ENCODE measurements at regions of chr1 and their contacts with region 1.

Region 1: DNA sequence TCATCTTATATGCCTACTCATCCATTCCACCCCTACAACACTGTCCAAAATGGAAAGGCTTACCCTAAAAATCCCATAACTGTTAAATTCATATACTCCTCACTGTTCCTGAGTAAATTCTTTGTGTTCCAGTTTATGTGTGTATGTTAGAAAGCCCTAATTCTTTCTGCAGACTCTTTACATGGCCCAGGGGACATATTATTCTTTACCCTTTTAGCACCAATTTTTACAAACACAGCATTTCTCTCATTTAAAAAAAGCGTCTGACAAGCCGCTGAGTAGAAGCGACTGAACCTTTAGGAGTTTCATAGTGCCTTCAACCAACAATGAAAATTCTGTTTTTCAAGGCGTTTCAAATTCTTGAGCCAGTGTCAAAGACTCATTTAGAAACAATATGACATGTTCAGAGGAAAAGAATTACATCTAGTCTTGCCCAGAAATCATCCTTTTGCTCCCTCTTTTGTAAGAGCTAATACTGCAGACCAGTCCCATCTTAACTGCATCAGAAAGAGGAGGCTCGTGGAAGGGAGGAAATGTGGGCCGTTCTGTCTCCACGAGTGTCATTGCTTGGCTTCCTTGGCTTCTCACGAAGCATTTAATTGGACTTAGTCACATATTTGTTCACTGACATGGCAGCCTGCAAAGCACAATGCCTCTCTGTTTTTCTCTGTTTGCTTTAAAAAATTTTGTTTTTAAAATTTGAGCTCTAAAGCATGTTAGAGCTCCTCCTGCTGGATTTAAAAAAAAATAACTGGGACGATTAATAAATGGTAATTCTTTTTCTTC is 21.3 kb upstream of the C1orf105 start:
- DNase-seq: peak; percentile 29
- H3K4me3 ChIP-seq: peak overlapping the region in 1 of 2 experiments; percentile 1; a peak in 1 of 4 replicates
- H3K27ac ChIP-seq: peak overlapping the region; percentile 85 to 88
- H3K4me1 ChIP-seq: peaks cover 13 to 29% of the 10 kb centered on the region in 2 experiments
- H3K27me3 ChIP-seq: no peaks in the 10 kb centered on the region
- CTCF ChIP-seq: peak; percentile 82
- EP300 ChIP-seq: peak in 1 of 2 experiments; percentile 66; a peak in 1 of 4 replicates
- RAD21 ChIP-seq: peak; percentile 81

Region 2: GRCh38 chr1:172040466-172040865 is 358.7 kb before region 1 on chr1:
- CTCF ChIA-PET with region 1: interaction called, 11 read pairs
- POLR2A ChIA-PET with region 1: no interaction called
- DNase-seq: no peak
- H3K4me3 ChIP-seq: no peak overlapping the region
- H3K27ac ChIP-seq: peak overlapping the region; percentile 10 to 17; a peak in 3 of 4 replicates
- H3K4me1 ChIP-seq: peaks cover 0 to 3% of the 10 kb centered on the region in 2 experiments; a peak in 2 of 4 replicates
- H3K27me3 ChIP-seq: no peaks in the 10 kb centered on the region
- CTCF ChIP-seq: no peak
- EP300 ChIP-seq: peak in 1 of 2 experiments; percentile 31; a peak in 1 of 4 replicates
- RAD21 ChIP-seq: no peak

Region 3: DNA sequence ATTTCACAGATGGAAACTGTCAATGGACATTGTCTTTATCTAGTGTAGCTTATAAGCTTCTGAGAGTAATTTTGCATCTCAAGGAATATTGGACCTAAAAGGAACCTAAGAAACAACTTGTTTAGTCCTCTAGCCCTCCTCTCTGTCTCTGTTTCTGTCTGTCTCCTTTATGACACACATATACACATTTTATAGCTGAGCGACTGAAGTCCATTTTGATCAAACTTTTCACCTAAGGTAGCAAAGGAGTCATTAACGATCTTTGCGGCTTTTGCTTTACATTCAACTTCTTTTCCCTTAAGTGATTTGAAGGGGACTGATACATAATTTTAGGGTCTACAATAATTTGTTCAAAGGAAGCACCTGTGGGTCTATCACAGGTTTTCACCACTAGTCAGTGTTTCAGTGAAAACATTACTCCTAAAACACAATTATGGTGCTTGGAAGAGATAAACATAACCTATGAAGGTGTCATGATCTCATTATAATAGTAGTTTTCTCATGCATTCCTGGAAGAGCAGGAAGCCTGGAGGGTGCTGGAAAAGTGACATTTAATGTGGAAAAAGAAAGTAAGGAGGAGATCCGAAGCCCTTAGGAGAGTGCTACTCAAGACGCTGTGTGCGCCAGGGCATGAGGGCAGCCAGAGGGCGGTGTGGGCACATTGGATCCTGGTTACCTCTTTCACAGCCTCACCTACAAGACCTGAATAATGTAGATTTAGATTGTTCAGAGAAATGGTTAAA is 309.2 kb before region 1 on chr1:
- CTCF ChIA-PET with region 1: interaction called, 31 read pairs
- POLR2A ChIA-PET with region 1: no interaction called
- DNase-seq: peak; percentile 42
- H3K4me3 ChIP-seq: no peak overlapping the region
- H3K27ac ChIP-seq: no peak overlapping the region
- H3K4me1 ChIP-seq: no peaks in the 10 kb centered on the region; a peak in 1 of 4 replicates
- H3K27me3 ChIP-seq: no peaks in the 10 kb centered on the region
- CTCF ChIP-seq: peak; percentile 71
- EP300 ChIP-seq: no peak
- RAD21 ChIP-seq: peak; percentile 86

Region 4: DNA sequence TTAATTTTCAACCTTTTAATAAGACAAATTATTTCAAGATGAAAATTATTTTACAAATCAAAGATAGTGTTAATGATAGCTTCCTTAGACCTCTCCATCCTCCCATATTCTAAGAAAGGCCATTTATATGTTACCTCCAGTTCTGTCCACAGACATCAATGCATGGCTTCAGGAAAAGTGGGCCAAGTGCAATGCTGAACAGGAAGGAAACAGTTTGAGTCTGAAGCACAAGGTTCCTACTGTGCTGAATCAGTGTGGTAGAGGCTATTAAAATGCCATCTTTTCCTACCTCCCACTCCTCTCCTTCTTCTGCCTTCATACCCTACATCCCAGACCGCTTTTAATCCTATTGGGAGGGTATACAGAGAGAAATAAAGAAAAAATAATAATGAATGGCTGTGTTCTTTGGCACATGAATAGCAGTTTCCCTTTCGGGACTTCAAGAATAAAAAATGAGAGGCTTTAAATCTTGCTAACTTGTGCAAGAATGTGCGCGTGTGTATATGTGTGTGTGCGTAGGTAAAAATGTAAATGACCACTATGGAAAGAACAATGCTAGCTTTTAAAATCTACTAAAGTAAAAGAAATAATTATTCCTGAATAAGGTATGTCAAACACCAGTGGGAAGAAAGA is 41.3 kb before region 1 on chr1:
- CTCF ChIA-PET with region 1: interaction called, 15 read pairs
- POLR2A ChIA-PET with region 1: no interaction called
- DNase-seq: no peak
- H3K4me3 ChIP-seq: peak overlapping the region; percentile 18 to 48; a peak in 1 of 4 replicates
- H3K27ac ChIP-seq: peak overlapping the region; percentile 97 to 100
- H3K4me1 ChIP-seq: peaks cover 51 to 54% of the 10 kb centered on the region in 2 experiments; a peak in 3 of 4 replicates
- H3K27me3 ChIP-seq: no peaks in the 10 kb centered on the region
- CTCF ChIP-seq: no peak
- EP300 ChIP-seq: no peak
- RAD21 ChIP-seq: no peak

Region 5: DNA sequence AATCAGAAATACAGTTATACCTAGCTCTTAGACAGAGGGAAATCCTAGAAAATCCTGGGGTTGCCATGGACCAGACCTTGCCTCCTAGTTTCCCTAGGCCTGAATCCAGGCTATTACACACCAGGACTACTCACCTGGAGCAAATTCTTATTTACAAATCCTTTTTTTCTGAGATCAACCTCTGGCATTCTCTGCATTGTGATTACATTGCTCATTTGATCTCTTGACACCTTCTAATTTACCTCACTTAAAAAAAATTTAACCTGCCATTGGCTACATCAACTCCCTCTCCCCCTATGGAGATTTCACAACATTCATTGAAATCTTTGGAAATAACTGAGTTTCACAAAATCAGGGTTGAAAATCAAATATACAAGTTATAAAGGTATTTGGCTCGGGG is 18.4 kb after region 1 on chr1:
- CTCF ChIA-PET with region 1: interaction called, 16 read pairs
- POLR2A ChIA-PET with region 1: no interaction called
- DNase-seq: no peak
- H3K4me3 ChIP-seq: no peak overlapping the region
- H3K27ac ChIP-seq: no peak overlapping the region
- H3K4me1 ChIP-seq: no peaks in the 10 kb centered on the region; a peak in 1 of 4 replicates
- H3K27me3 ChIP-seq: no peaks in the 10 kb centered on the region
- CTCF ChIP-seq: no peak
- EP300 ChIP-seq: no peak
- RAD21 ChIP-seq: no peak

Region 6: DNA sequence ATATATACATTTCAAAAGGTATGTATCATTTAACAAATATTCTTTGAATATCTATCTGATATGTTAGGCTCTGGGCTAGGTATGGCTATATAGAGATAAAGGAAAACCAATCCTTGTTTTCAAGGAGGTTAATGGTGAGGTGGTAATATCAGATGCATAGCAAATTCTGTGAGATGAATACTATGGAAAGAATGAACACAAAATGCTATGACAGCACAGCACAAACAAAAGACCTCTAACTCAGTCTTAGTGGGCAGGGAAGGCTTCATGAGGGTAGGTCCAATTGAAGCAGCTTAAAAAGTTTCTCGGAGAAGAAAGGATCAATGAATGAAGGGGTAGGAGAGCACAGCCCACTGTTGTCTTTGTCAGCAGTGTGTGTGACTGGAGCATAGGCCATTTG is 287.0 kb after region 1 on chr1:
- CTCF ChIA-PET with region 1: no interaction called
- POLR2A ChIA-PET with region 1: no interaction called
- DNase-seq: no peak
- H3K4me3 ChIP-seq: no peak overlapping the region
- H3K27ac ChIP-seq: no peak overlapping the region
- H3K4me1 ChIP-seq: no peaks in the 10 kb centered on the region
- H3K27me3 ChIP-seq: no peaks in the 10 kb centered on the region
- CTCF ChIP-seq: no peak
- EP300 ChIP-seq: no peak
- RAD21 ChIP-seq: no peak

Region 7: DNA sequence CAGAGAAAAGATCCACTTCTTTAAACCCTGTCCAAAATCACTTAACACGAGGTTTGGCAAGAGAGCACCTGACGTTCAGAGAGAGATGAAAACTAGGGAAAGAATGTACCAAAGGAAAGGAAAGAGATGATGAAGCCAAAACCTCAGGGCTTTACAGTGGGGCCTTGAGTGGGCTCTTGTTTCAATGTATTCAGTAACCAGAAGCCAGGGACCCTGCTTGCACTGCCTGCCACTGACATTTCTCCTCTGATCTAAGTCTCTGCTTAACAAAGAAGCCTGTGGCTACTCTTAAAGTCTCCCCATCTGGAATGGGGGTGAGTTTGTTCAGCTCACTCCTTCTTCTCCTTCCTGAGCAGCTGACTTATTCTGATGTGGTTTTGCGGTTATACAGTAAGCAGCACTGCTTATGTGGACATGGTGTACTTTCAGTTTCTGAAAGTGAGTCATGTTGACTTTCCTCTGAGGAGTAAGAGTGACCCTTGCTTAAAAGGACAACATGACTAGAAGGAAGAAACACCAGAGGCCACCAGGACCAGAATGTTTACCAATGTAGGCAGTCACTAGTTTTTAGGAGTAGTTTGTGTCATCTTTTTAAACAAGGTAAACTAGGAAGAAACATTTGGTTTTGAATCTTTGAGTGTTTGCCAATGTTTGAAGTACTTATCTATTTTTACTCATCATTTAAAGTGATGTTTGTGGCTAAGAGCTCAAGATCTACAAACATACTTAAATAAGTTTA is 347.1 kb after region 1 on chr1:
- CTCF ChIA-PET with region 1: no interaction called
- POLR2A ChIA-PET with region 1: no interaction called
- DNase-seq: no peak
- H3K4me3 ChIP-seq: no peak overlapping the region
- H3K27ac ChIP-seq: peak overlapping the region; percentile 13 to 79; a peak in 3 of 4 replicates
- H3K4me1 ChIP-seq: no peaks in the 10 kb centered on the region; a peak in 2 of 4 replicates
- H3K27me3 ChIP-seq: no peaks in the 10 kb centered on the region
- CTCF ChIP-seq: no peak
- EP300 ChIP-seq: peak in 1 of 2 experiments; percentile 76; a peak in 1 of 4 replicates
- RAD21 ChIP-seq: no peak